Astrocyte of the cerebellum (primary cell): ENCODE measurements at regions of chr13 and their contacts with region 1.

Region 1: DNA sequence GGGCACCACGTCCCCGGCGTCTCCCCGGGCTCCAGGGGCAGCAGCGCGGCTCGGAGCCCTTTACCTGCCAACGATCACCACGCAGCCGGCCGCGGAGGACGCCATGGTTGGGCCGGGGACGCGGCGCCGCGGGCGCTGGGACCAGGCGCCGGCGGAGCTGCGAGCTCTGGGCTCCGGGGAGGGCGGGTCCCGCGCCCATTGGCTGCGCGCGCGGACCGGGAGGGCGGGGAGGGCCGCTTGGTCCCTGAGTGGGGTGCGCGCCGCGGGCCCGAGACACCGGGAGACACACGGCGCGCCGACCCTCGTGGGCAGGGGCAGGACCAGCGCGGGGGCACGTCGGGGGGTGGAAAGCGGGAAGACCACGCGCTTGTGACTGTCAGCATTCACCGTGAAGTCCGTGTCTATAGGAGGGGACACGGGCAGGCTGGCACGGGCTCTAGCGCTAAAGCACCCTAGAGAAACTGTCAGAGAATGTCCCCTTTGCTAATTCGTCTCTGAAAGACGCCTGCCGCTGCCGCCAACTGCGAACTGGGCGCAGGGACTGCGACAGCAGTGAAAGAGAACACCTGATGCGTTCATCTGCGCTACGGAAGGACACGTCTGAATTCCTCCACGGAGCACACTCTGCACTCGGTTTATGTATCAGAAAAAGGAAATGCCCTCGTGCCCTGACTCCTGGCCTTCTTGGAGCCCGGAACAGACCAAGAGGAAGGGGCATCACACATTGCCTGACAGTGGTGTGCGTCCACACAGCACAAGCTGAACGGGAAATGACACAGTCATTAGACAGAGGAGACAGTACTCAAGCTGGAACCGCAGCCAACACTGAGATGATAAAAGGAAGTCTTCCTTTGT is at the start of gene CRYL1:
- DNase-seq: no peak
- H3K4me3 ChIP-seq: peak within 1 kb of the TSS; percentile 67
- CTCF ChIP-seq: no peak

Region 2: GRCh38 chr13:20566898-20567874 is 41.3 kb after region 1 on chr13 and contains the start of gene IFT88:
- in situ Hi-C with region 1: loop called (anchors 5 kb)
- DNase-seq: peak; percentile 61
- H3K4me3 ChIP-seq: peak within 1 kb of the TSS; percentile 62
- CTCF ChIP-seq: no peak